Heart left ventricle (tissue), 16 donors: ENCODE measurements at regions of chr1 and their contacts with region 1.

Region 1: DNA sequence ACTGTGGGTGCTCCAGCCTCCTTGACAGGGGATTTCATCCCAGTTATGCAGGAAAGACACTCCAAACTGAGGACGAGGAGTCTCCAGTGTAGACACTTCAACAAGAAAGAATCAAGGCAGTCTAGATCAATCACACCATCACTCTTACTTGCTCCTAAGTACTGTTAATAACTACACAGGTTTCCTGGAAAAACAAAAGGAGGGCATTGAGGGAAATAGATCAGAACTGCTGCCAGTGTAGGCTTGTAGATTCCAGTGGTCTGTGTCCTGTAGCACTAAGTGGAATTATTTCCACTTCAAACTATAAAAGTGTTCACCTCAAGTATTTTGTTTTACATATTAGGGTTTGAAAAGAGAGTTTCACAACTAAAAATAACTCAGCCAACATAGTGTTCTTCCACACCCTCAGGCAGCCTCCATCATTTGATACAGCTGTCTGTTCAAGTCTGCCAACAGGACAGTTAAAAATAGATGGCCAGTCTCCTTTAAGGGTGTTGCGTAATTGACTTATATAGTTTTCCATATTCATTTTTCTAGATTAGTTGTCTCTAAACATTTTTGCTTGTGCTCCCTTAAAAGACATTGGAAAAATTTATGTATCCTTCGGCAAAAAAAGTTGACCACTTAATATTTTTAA is 32.0 kb upstream of the AGL start:
- DNase-seq: no peak
- ATAC-seq: peak; percentile 86 to 93 (median 90)
- H3K4me3 ChIP-seq: no peak overlapping the region
- H3K27ac ChIP-seq: peak overlapping the region in 8 of 12 donors; percentile 5 to 72 (median 34)
- H3K4me1 ChIP-seq: peaks cover 0 to 10% (median 0%) of the 10 kb centered on the region in 12 donors
- H3K27me3 ChIP-seq: no peaks in the 10 kb centered on the region
- CTCF ChIP-seq: no peak
- POLR2A ChIP-seq: no peak

Region 2: GRCh38 chr1:99849744-99850458 is 31.7 kb after region 1 on chr1 and contains the start of gene AGL:
- intact Hi-C with region 1: loop called in 3 of 10 experiments (anchors 5 kb)
- DNase-seq: peak; percentile 86 to 94 (median 89)
- ATAC-seq: peak; percentile 88 to 97 (median 96)
- H3K4me3 ChIP-seq: peak within 1 kb of the TSS; percentile 62 to 90 (median 82)
- H3K27ac ChIP-seq: peak within 1 kb of the TSS; percentile 60 to 96 (median 89)
- H3K4me1 ChIP-seq: peaks cover 0 to 21% (median 8%) of the 10 kb centered on the region in 12 donors
- H3K27me3 ChIP-seq: no peaks in the 10 kb centered on the region
- CTCF ChIP-seq: no peak
- POLR2A ChIP-seq: peak in 1 of 2 donors; percentile 65
- total RNA-seq, gene AGL: 19.1 to 70.4 (median 52.9) TPM